Cardiac septum (tissue), 1 donor: ENCODE measurements at regions of chr13 and their contacts with region 1.

Region 1: DNA sequence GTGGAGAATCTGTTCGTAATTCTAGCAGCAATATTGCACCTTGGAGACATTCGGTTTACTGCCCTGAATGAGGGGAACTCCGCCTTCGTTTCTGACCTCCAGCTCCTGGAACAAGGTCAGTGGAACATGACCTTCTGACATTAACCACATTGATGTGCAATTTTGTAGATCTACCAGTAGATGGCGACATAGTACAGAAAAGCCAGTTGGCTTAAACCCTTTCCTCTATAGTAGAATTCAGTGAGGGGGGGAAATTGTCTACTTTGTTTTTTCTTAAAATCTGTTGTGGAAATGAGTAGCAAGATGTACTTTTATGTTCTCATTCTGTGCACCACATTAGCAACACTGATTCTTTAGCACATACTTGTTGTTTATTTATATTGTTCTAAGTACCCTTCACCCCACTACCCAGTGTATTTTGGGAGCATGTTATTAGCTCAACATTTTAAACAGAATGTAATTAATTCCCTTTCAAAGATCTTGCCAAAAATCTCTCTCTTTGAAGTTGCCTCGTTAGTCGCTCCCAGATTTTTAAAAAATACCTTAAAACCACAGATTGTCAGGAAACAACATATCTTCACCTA is 332.2 kb downstream of the MYO16 start:
- DNase-seq: no peak

Region 2: GRCh38 chr13:109126891-109127641 is 165.4 kb after region 1 on chr13:
- intact Hi-C with region 1: loop called (anchors 10 kb)
- DNase-seq: no peak

Region 3: DNA sequence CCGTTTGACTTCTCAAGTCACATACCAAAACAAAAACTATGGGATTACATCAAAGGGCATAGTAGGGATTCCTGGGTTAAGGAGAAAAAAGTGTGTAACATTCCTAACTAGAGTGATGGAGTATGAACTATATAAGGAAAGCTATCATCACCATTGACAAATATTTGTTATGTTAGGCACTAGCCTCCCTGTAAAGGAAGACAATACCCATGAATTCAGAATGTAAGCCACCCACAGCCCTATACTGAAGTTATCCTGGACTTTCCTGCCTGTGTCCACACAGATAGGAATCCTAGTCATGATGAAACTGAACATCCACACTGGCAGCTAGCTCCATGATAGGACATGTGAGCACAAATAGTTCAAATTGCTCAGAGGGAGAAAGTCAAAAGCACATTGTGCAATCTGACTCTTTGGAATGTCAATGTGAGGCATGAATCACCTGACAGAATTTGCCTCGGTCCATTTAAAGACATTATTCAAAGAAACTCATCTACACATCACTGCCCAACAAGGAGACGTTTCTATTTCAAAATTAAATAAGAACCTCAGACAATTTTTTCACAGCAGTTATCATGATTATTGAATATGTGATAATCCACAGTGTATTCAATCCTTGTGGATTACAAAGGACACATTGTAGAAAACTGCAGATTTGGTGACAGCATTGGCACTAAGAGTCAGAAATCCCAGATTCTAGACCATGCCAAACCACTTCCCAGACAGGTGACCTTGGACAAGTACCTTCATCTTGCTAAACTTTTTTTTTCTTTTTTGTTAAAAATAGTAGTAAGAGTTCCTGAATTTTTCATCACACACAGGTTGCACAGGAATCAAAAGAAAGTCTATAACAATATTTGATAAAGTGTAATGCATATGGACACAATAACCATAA is 295.5 kb after region 1 on chr13:
- intact Hi-C with region 1: no loop called
- DNase-seq: no peak